Activated naive CD4-positive, alpha-beta T cell treated with anti-CD3 and anti-CD28 coated beads for 36 hours (primary cell): ENCODE measurements at regions of chr16 and their contacts with region 1.

Region 1: DNA sequence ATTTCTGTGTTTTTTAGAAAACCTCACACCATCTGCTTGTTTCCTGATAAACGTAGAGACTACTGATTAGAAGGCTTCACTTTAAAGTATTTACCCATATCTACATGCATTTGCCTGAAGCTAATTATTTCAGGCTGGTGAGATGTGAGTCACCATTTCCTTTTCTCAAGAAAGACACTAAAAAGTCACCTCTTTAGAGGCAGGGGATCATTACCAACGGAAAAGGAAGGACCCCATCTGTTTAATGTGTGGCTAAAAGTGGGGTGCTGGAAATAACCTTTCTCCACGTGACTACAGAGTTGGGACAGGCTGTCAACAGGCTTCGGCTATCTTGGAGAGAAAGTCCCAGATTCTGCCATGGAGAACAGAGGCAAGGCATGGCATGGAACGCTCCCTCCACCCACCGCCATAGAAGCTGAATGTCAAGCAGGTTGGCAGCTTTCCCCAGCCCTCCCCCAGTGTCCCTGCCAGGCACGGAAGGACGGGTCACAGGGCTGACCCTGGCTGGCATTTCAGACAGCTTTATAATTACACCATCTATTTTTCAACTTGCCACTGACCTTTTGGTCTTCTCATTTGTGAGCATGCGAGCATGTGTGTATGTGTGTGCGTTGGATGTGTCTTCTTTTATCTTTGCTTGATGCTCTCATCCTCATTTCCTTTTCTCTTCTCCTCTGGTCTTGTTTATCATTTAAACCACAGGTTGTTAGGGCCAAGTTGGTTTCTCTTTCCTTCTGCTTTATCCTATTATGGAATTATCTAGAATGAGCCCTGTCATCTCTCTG is 157.0 kb downstream of the CPPED1 start:
- DNase-seq: peak; percentile 53
- H3K4me3 Mint-ChIP-seq: peak overlapping the region; percentile 16
- H3K27ac Mint-ChIP-seq: peak overlapping the region; percentile 85
- H3K4me1 Mint-ChIP-seq: peaks cover 18% of the 10 kb centered on the region
- H3K27me3 Mint-ChIP-seq: no peaks in the 10 kb centered on the region

Region 2: DNA sequence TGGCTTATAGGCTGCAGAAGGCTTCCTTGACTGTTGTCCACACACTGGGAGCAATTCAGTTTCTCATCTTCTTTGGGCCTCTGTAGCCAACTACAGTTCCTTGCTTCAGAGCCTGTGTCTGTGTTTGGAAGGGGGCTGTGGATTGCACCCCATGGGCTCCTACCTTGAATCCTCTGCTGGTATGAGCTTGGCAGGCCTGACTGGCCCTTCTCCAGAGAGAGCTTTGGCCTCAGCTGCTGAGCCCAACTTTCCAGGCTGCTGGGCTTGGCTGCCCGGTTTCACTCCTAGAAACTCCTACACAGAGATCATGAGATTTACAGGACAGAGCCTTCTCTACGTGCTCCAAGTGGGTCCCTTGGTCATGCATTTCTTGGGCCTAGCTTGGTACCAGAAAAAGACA is 315.7 kb before region 1 on chr16:
- CTCF ChIA-PET with region 1: no interaction called
- intact Hi-C with region 1: no loop called
- DNase-seq: no peak
- H3K4me3 Mint-ChIP-seq: no peak overlapping the region
- H3K27ac Mint-ChIP-seq: no peak overlapping the region
- H3K4me1 Mint-ChIP-seq: peaks cover 9% of the 10 kb centered on the region
- H3K27me3 Mint-ChIP-seq: no peaks in the 10 kb centered on the region

Region 3: GRCh38 chr16:12590963-12591362 is 55.7 kb before region 1 on chr16:
- CTCF ChIA-PET with region 1: no interaction called
- intact Hi-C with region 1: loop called (anchors 1 kb)
- DNase-seq: no peak
- H3K4me3 Mint-ChIP-seq: no peak overlapping the region
- H3K27ac Mint-ChIP-seq: no peak overlapping the region
- H3K4me1 Mint-ChIP-seq: peaks cover 15% of the 10 kb centered on the region
- H3K27me3 Mint-ChIP-seq: peaks cover 12% of the 10 kb centered on the region

Region 4: GRCh38 chr16:12613131-12613991 is 33.3 kb before region 1 on chr16:
- CTCF ChIA-PET with region 1: no interaction called
- intact Hi-C with region 1: loop called (anchors 2 kb)
- DNase-seq: peak; percentile 69
- H3K4me3 Mint-ChIP-seq: no peak overlapping the region
- H3K27ac Mint-ChIP-seq: no peak overlapping the region
- H3K4me1 Mint-ChIP-seq: peaks cover 26% of the 10 kb centered on the region
- H3K27me3 Mint-ChIP-seq: peaks cover 14% of the 10 kb centered on the region

Region 5: DNA sequence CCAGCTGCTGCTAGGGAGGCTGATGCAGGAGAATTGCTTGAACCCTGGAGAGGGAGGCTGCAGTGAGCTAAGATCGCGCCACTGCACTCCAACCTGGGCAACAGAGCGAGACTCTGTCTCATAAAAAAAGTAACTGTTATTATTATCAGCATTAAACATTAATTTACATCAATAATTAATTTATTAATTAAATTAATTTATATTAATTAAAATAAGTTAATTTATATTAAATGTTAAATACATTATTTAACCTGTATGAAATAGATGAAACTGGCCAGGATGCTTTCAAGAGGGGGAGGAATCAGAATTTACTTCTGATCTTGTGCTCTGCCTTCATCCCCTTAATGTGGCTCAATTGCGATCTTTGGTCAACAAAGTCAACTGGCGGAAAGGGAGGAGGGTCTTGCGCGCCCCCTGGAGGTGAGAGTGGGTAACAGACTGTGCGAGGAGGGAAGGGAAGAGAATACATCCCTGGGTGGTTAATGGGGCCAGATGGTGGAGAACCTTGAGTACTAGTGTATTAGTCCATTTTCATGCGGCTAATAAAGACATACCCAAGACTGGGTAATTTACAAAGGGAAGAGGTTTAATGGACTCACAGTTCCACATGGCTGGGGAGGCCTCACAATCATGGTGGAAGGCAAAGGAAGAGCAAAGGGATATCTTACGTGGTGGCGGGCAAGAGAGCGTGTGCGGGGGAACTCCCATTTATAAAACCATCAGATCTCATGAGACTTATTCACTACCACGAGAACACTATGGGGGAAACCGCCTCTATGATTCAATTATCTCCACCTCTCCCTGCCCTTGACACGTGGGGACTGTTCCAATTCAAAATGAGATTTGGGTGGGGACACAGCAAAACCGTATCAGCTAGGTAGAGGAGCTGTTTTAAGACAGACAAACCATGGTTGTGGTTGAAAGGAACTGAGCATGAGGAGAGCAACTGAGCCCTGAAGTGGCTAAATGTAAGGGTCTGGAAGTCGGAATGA is 172.7 kb after region 1 on chr16:
- CTCF ChIA-PET with region 1: no interaction called
- intact Hi-C with region 1: no loop called
- DNase-seq: peak; percentile 88
- H3K4me3 Mint-ChIP-seq: no peak overlapping the region
- H3K27ac Mint-ChIP-seq: no peak overlapping the region
- H3K4me1 Mint-ChIP-seq: no peaks in the 10 kb centered on the region
- H3K27me3 Mint-ChIP-seq: no peaks in the 10 kb centered on the region